Ascending aorta (tissue), 2 donors: ENCODE measurements at regions of chr1 and their contacts with region 1.

Region 1: GRCh38 chr1:3069491-3070303 is 694 bp downstream of the PRDM16 start:
- DNase-seq: peak; percentile 8 to 82
- H3K4me3 ChIP-seq: peak overlapping the region; percentile 95 to 97
- H3K27ac ChIP-seq: peak overlapping the region; percentile 99 to 100
- H3K4me1 ChIP-seq: peaks cover 6 to 32% of the 10 kb centered on the region in 2 donors
- H3K27me3 ChIP-seq: no peaks in the 10 kb centered on the region
- CTCF ChIP-seq: peak in 1 of 3 experiments; percentile 49

Region 2: DNA sequence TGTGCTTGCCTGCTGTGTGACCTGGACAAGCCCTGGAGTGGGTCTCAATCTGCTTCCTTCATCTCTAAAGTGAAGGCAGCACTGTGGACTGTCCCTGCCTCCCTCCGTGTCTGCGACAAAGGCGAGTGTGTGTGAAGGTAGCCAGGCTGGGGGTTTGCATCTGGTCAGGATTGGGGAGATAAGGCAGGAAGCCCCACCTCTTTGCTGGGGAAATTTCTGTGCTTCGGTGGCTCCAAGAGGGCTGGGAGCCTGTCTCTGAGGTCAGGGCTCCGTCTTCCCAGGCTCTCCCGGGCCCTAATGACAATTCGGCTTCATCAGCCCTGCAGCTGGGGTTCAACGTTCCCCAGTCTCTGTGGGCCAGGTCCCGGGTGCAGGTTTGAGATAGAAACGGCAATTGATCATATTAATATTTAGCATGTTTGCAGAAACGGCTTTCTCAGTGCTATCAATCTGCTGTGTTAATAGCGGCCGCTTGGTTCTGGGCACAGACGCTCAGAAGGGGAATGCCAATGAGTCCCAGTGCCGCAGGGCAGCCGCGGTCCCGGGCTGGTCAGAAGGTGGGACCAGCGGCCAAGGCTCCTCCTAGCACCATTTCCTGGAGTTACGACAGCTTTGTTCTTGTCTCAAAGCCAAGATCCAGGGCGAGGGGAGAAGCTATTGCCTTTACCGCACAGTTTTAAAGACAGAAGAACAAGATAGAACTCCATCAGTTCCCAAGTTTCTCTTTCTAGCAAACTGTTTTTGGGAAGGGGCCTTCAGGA is 105.0 kb after region 1 on chr1:
- intact Hi-C with region 1: loop called (anchors 1 kb)
- DNase-seq: peak; percentile 59 to 94
- H3K4me3 ChIP-seq: peak overlapping the region in 1 of 2 donors; percentile 51
- H3K27ac ChIP-seq: peak overlapping the region; percentile 91 to 93
- H3K4me1 ChIP-seq: peaks cover 25 to 62% of the 10 kb centered on the region in 2 donors
- H3K27me3 ChIP-seq: no peaks in the 10 kb centered on the region
- CTCF ChIP-seq: no peak

Region 3: GRCh38 chr1:3275471-3276340 is 206.0 kb after region 1 on chr1:
- intact Hi-C with region 1: loop called (anchors 2 kb)
- DNase-seq: peak; percentile 39 to 86
- H3K4me3 ChIP-seq: peak overlapping the region in 1 of 2 donors; percentile 44
- H3K27ac ChIP-seq: peak overlapping the region; percentile 91 to 93
- H3K4me1 ChIP-seq: peaks cover 12 to 36% of the 10 kb centered on the region in 2 donors
- H3K27me3 ChIP-seq: no peaks in the 10 kb centered on the region
- CTCF ChIP-seq: no peak

Region 4: GRCh38 chr1:3312898-3313575 is 243.3 kb after region 1 on chr1:
- intact Hi-C with region 1: loop called (anchors 2 kb)
- DNase-seq: peak; percentile 93 to 99
- H3K4me3 ChIP-seq: peak overlapping the region; percentile 11 to 57
- H3K27ac ChIP-seq: peak overlapping the region; percentile 98 to 99
- H3K4me1 ChIP-seq: peaks cover 23 to 65% of the 10 kb centered on the region in 2 donors
- H3K27me3 ChIP-seq: no peaks in the 10 kb centered on the region
- CTCF ChIP-seq: no peak

Region 5: GRCh38 chr1:3369446-3370076 is 299.9 kb after region 1 on chr1:
- intact Hi-C with region 1: loop called (anchors 1 kb)
- DNase-seq: peak; percentile 79 to 96
- H3K4me3 ChIP-seq: peak overlapping the region in 1 of 2 donors; percentile 21
- H3K27ac ChIP-seq: peak overlapping the region; percentile 95 to 97
- H3K4me1 ChIP-seq: peaks cover 47 to 86% of the 10 kb centered on the region in 2 donors
- H3K27me3 ChIP-seq: no peaks in the 10 kb centered on the region
- CTCF ChIP-seq: no peak

Region 6: GRCh38 chr1:3410142-3410925 is 340.6 kb after region 1 on chr1:
- intact Hi-C with region 1: loop called (anchors 1 kb)
- DNase-seq: peak in 1 of 2 donors; percentile 77
- H3K4me3 ChIP-seq: no peak overlapping the region
- H3K27ac ChIP-seq: peak overlapping the region in 1 of 2 donors; percentile 13
- H3K4me1 ChIP-seq: peaks cover 0 to 3% of the 10 kb centered on the region in 2 donors
- H3K27me3 ChIP-seq: no peaks in the 10 kb centered on the region
- CTCF ChIP-seq: peak; percentile 79 to 85 (median 79)